ENCODE measurements at regions of chr12 and their contacts with region 1.

Region 1: DNA sequence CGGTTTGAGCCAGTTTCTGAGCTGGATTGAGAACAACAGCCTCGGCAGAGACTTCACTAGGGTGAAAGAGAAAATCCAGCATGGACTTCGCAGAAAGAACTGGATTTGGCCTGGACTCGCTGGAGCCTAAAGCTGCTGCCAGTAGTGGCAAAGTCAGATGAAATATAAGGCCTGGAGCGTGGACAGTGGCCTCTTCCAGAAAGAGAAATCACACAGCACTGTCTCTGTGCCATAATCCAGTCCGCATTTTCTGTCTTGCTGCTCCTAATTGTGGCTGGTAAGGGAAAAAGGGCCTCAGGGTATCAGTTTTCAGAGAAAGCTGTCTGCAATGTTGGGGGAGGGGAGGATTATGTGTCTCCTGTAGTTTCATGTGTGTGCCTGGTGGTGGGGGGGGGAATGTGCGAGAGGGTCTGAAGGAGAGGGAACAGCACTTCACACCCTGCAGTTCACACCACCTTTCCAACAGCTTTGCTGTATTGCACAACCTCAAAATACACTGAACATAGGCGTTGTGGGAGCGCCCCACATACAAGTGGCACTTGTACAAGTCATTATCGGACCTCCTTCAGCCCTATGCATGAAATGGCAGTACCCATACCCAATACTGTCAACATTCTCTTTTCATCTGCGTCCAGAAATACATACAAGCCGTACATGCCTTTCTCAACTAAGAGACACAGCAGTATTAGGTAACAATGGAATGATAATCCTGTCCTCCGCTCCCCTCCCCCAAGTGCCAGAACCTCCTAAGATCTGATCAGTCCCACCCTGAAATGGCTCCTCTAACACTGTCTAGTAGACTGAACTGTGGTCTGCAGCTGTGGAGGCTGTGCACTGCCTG is 107.5 kb upstream of the ATF7IP start:
- DNase-seq: no peak
- ATAC-seq: peak; percentile 68
- H3K4me3 Mint-ChIP-seq: peak overlapping the region; percentile 75
- H3K27ac Mint-ChIP-seq: peak overlapping the region; percentile 98
- H3K4me1 Mint-ChIP-seq: peaks cover 70% of the 10 kb centered on the region
- H3K27me3 Mint-ChIP-seq: no peaks in the 10 kb centered on the region
- CTCF ChIP-seq: no peak

Region 2: DNA sequence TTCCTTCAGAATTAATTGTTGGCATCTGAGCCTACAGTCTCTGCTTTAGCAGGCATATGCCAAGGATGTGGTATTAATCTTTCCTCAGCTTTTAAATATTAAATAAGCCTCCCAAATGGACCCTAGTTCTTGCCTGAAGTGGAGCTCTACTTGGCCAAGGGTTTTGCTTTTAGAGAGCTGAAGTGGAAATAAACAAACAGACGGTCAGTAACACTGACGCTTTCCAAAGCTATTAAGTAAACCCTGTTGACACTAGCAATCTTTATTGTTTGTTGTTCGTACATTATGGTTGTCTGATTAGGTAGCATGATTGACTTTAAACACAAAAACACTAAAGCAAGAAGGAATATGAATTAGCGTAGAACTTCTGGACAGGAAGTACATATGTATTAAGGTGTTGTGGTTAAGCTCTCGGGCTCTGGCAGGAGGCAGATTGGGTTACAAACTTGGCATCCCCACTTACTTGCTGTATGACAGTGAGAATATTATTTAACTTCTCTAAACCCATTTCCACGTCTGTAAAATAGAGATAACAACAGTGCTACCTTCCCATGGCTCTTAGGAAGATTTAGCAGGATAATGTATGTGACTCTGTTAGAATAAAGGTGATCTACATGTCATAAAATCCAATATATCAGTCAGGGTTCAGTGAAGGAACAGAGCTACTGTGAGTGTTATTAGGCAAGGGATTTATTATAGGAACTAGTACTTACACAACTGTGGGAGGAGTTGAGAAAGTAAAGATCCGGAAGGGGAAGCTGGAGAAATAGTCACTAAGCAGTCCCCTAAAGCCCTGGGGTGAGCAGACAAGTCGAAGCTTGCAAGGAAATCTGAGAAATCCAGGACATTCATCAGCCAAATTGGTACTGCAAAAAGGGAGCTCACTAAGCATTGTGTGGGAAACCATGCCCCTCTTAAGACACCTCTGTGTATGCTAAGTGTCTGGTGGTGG is 15.3 kb after region 1 on chr12:
- CTCF ChIA-PET with region 1: interaction called, 5 read pairs
- POLR2A ChIA-PET with region 1: interaction called, 19 read pairs
- intact Hi-C with region 1: loop called (anchors 1 kb)
- DNase-seq: no peak
- ATAC-seq: peak; percentile 68
- H3K4me3 Mint-ChIP-seq: peak overlapping the region; percentile 54
- H3K27ac Mint-ChIP-seq: peak overlapping the region; percentile 87
- H3K4me1 Mint-ChIP-seq: peaks cover 53% of the 10 kb centered on the region
- H3K27me3 Mint-ChIP-seq: no peaks in the 10 kb centered on the region
- CTCF ChIP-seq: no peak

Region 3: DNA sequence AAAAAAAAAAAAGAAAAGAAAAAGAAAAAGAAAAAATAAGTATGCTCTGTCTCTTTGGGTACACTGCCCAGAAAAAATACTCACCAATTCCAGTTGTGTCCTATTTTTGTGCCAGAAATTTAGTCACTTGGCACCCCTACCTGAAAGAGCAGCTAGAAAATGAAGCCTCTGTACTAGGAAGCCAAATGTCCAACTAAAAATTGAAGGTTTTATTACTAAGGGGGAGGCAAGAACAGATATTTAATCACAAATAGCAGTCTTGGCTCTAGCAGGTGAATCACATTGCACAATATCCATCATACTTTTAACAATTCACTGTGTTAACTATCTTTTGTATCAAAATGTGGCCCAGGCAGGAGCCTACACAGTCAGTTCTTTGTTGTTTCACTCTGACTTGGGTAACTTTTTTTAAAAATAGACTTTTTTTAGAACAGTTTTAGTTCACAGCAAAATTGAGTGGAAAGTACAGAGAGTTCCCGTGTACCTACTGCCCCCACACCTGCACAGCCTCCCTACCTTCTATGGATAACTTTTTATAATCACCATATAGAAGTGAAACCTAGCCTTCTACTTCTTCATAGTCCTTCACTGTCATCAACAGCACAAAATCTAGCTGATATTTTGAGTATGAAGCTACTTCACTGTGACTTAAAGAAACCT is 20.5 kb after region 1 on chr12:
- CTCF ChIA-PET with region 1: interaction called, 5 read pairs
- POLR2A ChIA-PET with region 1: interaction called, 19 read pairs
- intact Hi-C with region 1: loop called (anchors 1 kb)
- DNase-seq: no peak
- ATAC-seq: peak; percentile 32
- H3K4me3 Mint-ChIP-seq: peak overlapping the region; percentile 24
- H3K27ac Mint-ChIP-seq: peak overlapping the region; percentile 85
- H3K4me1 Mint-ChIP-seq: peaks cover 76% of the 10 kb centered on the region
- H3K27me3 Mint-ChIP-seq: no peaks in the 10 kb centered on the region
- CTCF ChIP-seq: no peak

Region 4: DNA sequence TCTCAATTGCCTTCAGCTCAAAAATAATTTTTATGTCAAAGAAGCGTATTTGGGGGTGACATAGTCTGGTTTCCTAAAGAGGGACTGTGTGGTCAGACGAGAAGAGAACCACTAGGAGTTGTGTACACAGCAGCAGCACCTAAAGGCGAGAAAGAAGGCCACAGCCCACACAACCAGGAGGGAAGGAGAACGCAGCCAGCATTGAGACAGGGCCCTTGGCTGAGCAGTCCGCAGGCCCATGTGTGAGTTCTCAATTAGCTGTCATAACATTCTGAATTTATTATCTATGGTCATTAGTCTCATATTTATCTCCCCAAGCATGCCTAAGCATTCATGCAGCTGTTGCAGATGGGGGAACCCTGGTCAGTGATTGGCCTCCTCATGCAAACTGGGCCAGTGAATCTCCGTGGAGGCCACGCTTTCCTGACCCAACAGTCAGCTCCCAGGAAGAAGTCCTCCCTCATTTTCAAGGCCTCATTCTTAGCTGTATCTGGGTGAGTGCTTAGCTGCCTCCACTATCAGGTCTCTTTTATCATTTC is 26.3 kb after region 1 on chr12:
- CTCF ChIA-PET with region 1: interaction called, 3 read pairs
- POLR2A ChIA-PET with region 1: interaction called, 11 read pairs
- intact Hi-C with region 1: loop called (anchors 1 kb)
- DNase-seq: no peak
- ATAC-seq: peak; percentile 36
- H3K4me3 Mint-ChIP-seq: peak overlapping the region; percentile 67
- H3K27ac Mint-ChIP-seq: peak overlapping the region; percentile 96
- H3K4me1 Mint-ChIP-seq: peaks cover 46% of the 10 kb centered on the region
- H3K27me3 Mint-ChIP-seq: no peaks in the 10 kb centered on the region
- CTCF ChIP-seq: no peak

Region 5: DNA sequence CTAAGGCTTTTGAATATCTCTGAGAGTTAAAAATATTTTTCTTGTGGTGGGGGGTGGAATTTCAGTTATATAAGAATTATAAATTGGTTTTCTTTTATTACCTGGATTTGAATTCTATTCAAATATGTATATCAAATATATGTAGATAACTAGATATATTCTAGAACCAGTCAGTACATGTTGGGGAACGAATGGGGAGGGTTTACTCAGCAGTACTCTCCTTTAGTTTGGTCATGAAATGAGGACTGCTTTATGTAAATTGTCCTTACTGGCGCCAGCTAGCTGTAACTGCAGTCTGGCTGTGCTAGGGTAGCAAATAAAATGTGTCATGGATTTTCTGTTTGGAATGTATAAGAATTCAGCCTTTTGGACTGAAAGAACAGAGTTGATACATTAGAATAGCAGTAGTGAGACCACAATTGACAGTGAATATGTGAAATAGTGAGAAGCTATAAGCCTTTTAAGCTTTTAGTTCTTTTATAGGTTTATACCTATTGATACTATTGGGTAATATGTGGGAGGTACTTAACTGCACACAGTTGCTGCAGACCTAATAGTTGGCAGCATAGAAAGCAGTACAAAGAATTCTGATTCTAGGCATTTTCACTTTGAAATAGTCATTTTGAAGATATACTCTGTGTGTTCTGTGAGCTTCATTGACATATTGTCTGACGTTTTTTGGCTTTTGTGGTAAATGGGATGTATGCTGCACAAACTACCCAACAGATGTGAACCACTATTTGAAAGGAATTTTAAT is 136.5 kb after region 1 on chr12:
- CTCF ChIA-PET with region 1: interaction called, 7 read pairs
- POLR2A ChIA-PET with region 1: interaction called, 20 read pairs
- intact Hi-C with region 1: loop called (anchors 1 kb)
- DNase-seq: no peak
- ATAC-seq: peak; percentile 75
- H3K4me3 Mint-ChIP-seq: peak overlapping the region; percentile 77
- H3K27ac Mint-ChIP-seq: peak overlapping the region; percentile 90
- H3K4me1 Mint-ChIP-seq: peaks cover 82% of the 10 kb centered on the region
- H3K27me3 Mint-ChIP-seq: no peaks in the 10 kb centered on the region
- CTCF ChIP-seq: no peak

Region 6: DNA sequence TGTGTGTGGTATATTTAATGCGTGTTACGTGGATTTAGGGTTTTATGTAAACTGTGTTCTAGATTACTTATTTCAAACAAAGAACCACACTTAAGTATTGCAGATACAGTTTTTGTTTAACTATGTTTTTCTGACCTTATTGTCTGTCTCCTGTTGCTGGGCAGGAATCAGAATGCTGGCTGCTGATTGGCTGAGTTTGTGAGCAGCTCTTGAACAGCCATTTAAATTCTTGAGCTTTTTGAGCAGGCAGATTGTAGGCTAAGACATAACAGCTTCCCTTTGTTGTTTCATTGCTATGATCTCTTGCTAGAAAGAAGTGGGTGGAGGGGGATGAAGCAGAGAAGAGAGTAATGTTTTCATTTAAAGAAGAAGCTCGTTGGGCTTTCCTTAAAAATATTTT is 159.8 kb after region 1 on chr12:
- CTCF ChIA-PET with region 1: interaction called, 6 read pairs
- POLR2A ChIA-PET with region 1: interaction called, 6 read pairs
- intact Hi-C with region 1: loop called (anchors 1 kb)
- DNase-seq: no peak
- ATAC-seq: peak; percentile 59
- H3K4me3 Mint-ChIP-seq: peak overlapping the region; percentile 58
- H3K27ac Mint-ChIP-seq: peak overlapping the region; percentile 82
- H3K4me1 Mint-ChIP-seq: peaks cover 55% of the 10 kb centered on the region
- H3K27me3 Mint-ChIP-seq: no peaks in the 10 kb centered on the region
- CTCF ChIP-seq: no peak

Region 7: GRCh38 chr12:14454098-14454907 is 196.3 kb after region 1 on chr12:
- CTCF ChIA-PET with region 1: interaction called, 10 read pairs
- POLR2A ChIA-PET with region 1: interaction called, 3 read pairs
- intact Hi-C with region 1: loop called (anchors 1 kb)
- DNase-seq: no peak
- ATAC-seq: peak; percentile 97
- H3K4me3 Mint-ChIP-seq: no peak overlapping the region
- H3K27ac Mint-ChIP-seq: peak overlapping the region; percentile 74
- H3K4me1 Mint-ChIP-seq: peaks cover 41% of the 10 kb centered on the region
- H3K27me3 Mint-ChIP-seq: no peaks in the 10 kb centered on the region
- CTCF ChIP-seq: no peak

Measured in activated B cell treated with CpG ODN at 0.5 μM for 24 hours (primary cell).